ENCODE measurements at regions of chr9 and their contacts with region 1.

Region 1: DNA sequence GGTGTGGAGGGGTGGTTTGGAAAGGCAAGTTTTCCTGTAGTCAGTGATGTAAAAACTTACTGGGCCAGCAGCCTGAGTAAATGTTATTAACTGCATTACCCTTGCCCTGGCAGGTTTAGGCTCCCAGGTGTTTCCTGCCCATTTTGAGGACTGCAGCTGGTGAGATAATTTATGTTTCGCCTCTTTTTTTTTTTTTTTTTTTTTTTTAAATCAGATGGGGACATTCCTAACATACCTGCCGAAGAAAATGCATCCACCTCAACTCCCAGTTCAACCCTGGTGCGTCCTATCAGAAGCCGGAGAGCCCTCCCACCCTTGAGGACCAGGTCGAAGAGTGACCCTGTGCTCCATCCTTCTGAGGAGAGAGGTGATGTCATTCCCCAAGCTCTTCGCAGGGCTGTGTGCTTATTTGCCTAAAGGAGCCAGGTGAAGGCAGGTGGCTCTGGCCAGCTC is 60.6 kb downstream of the ENTREP1 start:
- DNase-seq: peak; percentile 54 to 69
- H3K4me3 ChIP-seq: no peak overlapping the region
- H3K27ac ChIP-seq: no peak overlapping the region
- H3K4me1 ChIP-seq: peaks cover 44% of the 10 kb centered on the region
- H3K27me3 ChIP-seq: no peaks in the 10 kb centered on the region
- CTCF ChIP-seq: no peak

Region 2: DNA sequence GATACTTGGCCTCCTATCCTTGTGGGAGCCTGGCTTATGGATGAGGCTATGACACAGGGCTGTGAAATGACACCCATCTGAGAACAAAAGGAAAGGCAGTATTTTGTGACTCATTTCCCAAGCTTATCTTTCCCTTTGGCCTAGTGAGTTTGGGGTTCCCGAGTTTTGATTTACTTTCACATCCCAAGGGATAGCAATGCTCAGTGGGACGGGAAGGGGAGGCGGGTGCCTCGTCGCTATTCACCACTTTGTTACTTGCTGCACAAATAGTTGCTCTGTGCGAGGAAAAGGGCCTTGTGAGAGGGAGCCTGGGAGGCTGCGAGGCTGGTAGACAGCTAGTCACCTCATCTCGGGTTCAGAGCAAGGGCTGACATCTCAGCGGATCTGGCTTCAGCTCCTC is 119.7 kb before region 1 on chr9:
- CTCF ChIA-PET with region 1: no interaction called
- POLR2A ChIA-PET with region 1: no interaction called
- intact Hi-C with region 1: loop called (anchors 10 kb)
- DNase-seq: no peak
- H3K4me3 ChIP-seq: no peak overlapping the region
- H3K27ac ChIP-seq: no peak overlapping the region
- H3K4me1 ChIP-seq: peaks cover 7% of the 10 kb centered on the region; the same call in 1 of the 2 replicates
- H3K27me3 ChIP-seq: no peaks in the 10 kb centered on the region
- CTCF ChIP-seq: no peak

Region 3: GRCh38 chr9:69645488-69645887 is 259.9 kb after region 1 on chr9:
- CTCF ChIA-PET with region 1: no interaction called
- POLR2A ChIA-PET with region 1: no interaction called
- intact Hi-C with region 1: no loop called
- DNase-seq: peak; percentile 61 to 73
- H3K4me3 ChIP-seq: no peak overlapping the region
- H3K27ac ChIP-seq: no peak overlapping the region
- H3K4me1 ChIP-seq: no peaks in the 10 kb centered on the region
- H3K27me3 ChIP-seq: no peaks in the 10 kb centered on the region
- CTCF ChIP-seq: no peak

Measured in PC-9 (cell line).